Colonic mucosa (tissue), 4 donors: ENCODE measurements at regions of chr1 and their contacts with region 1.

Region 1: GRCh38 chr1:182397771-182398393 is 2.6 kb downstream of the TEDDM1 start:
- DNase-seq: no peak
- H3K4me3 ChIP-seq: no peak overlapping the region
- H3K27ac ChIP-seq: no peak overlapping the region
- H3K4me1 ChIP-seq: no peaks in the 10 kb centered on the region
- H3K27me3 ChIP-seq: no peaks in the 10 kb centered on the region
- CTCF ChIP-seq: no peak

Region 2: GRCh38 chr1:182301467-182302198 is 96.2 kb before region 1 on chr1:
- intact Hi-C with region 1: loop called (anchors 5 kb)
- DNase-seq: peak; percentile 68
- H3K4me3 ChIP-seq: no peak overlapping the region
- H3K27ac ChIP-seq: peak overlapping the region; percentile 57
- H3K4me1 ChIP-seq: peaks cover 13% of the 10 kb centered on the region
- H3K27me3 ChIP-seq: no peaks in the 10 kb centered on the region
- CTCF ChIP-seq: no peak

Region 3: DNA sequence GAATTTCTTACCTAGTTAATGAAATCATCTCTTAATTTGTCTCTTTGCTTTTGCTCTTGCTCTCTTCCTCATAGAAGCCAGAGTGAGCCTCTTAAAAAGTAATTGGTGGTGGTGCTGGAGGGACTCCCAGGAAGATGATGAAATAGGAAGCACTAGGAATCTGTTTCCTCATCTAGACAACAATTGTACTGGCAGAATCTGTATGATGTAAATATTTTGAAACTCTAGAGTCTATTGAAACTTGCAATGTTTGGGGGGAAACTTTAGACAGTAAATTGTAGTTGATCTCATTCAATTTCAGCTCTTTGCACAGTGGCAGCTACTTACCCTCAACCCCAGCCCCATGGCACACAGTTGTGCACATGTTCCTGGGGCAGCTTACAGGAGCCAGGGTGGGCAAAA is 62.7 kb after region 1 on chr1:
- intact Hi-C with region 1: no loop called
- DNase-seq: no peak
- H3K4me3 ChIP-seq: no peak overlapping the region
- H3K27ac ChIP-seq: no peak overlapping the region
- H3K4me1 ChIP-seq: no peaks in the 10 kb centered on the region
- H3K27me3 ChIP-seq: no peaks in the 10 kb centered on the region
- CTCF ChIP-seq: no peak